ACHN (cell line): ENCODE measurements at regions of chr7 and their contacts with region 1.

Region 1: GRCh38 chr7:27160546-27161213 is 4.2 kb upstream of the HOXA7 start:
- DNase-seq: peak; percentile 91

Region 2: GRCh38 chr7:26388256-26388655 is 772.4 kb before region 1 on chr7:
- in situ Hi-C with region 1: loop called (anchors 10 kb)
- DNase-seq: no peak